ENCODE measurements at regions of chr18 and their contacts with region 1.

Region 1: GRCh38 chr18:20971886-20972267 is 139.7 kb downstream of the ROCK1 start:
- DNase-seq: peak in 1 of 2 donors; percentile 46
- ATAC-seq: peak; percentile 37 to 63 (median 63)
- H3K4me3 ChIP-seq: no peak overlapping the region
- H3K4me3 Mint-ChIP-seq: no peak overlapping the region
- H3K27ac ChIP-seq: no peak overlapping the region
- H3K27ac Mint-ChIP-seq: peak overlapping the region in 1 of 2 donors; percentile 4
- H3K4me1 ChIP-seq: no peaks in the 10 kb centered on the region
- H3K4me1 Mint-ChIP-seq: peaks cover 5 to 16% of the 10 kb centered on the region in 2 donors
- H3K27me3 ChIP-seq: no peaks in the 10 kb centered on the region
- H3K27me3 Mint-ChIP-seq: no peaks in the 10 kb centered on the region
- CTCF ChIP-seq: peak; percentile 52

Region 2: GRCh38 chr18:21012308-21012707 is 40.4 kb after region 1 on chr18:
- intact Hi-C with region 1: no loop called
- DNase-seq: no peak
- ATAC-seq: no peak
- H3K4me3 ChIP-seq: no peak overlapping the region
- H3K4me3 Mint-ChIP-seq: no peak overlapping the region
- H3K27ac ChIP-seq: no peak overlapping the region
- H3K27ac Mint-ChIP-seq: peak overlapping the region in 1 of 2 donors; percentile 26
- H3K4me1 ChIP-seq: no peaks in the 10 kb centered on the region
- H3K4me1 Mint-ChIP-seq: peaks cover 0 to 9% of the 10 kb centered on the region in 2 donors
- H3K27me3 ChIP-seq: no peaks in the 10 kb centered on the region
- H3K27me3 Mint-ChIP-seq: no peaks in the 10 kb centered on the region
- CTCF ChIP-seq: no peak

Region 3: GRCh38 chr18:21038201-21038600 is 66.3 kb after region 1 on chr18:
- intact Hi-C with region 1: no loop called
- DNase-seq: no peak
- ATAC-seq: no peak
- H3K4me3 ChIP-seq: no peak overlapping the region
- H3K4me3 Mint-ChIP-seq: no peak overlapping the region
- H3K27ac ChIP-seq: no peak overlapping the region
- H3K27ac Mint-ChIP-seq: peak overlapping the region in 1 of 2 donors; percentile 72
- H3K4me1 ChIP-seq: no peaks in the 10 kb centered on the region
- H3K4me1 Mint-ChIP-seq: peaks cover 15 to 21% of the 10 kb centered on the region in 2 donors
- H3K27me3 ChIP-seq: no peaks in the 10 kb centered on the region
- H3K27me3 Mint-ChIP-seq: no peaks in the 10 kb centered on the region
- CTCF ChIP-seq: no peak

Region 4: DNA sequence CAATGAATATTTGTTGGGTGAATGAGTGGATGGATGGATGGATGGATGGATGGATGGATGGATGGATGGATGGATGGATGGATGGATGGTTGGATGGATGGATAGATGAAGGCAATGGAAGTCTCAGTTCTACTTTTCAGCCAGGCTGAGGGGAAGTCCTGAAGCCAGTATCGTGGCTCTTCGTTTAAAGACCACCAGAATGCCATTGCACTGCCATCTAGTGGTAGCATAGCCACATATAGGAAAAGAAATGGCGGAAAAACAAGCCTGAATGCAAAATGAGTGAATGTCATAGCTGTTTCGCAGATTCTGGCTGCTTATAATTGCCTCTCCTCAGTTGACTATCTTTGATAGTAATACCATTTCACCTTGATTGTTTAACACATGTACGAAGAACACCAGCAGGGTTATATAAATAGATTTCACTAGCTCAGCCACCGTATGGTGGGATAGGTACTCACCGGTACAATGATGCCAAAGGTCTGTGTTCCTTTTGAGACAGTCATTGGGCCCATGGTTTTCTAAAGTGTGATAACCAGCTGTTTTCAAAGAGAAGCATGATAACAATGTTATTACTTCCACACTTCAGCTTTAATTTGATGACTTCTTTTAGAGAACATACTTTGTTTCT is 207.8 kb after region 1 on chr18:
- intact Hi-C with region 1: loop called (anchors 5 kb)
- DNase-seq: peak; percentile 20 to 75
- ATAC-seq: peak; percentile 72 to 83 (median 79)
- H3K4me3 ChIP-seq: no peak overlapping the region
- H3K4me3 Mint-ChIP-seq: no peak overlapping the region
- H3K27ac ChIP-seq: no peak overlapping the region
- H3K27ac Mint-ChIP-seq: no peak overlapping the region
- H3K4me1 ChIP-seq: no peaks in the 10 kb centered on the region
- H3K4me1 Mint-ChIP-seq: peaks cover 5 to 6% of the 10 kb centered on the region in 2 donors
- H3K27me3 ChIP-seq: no peaks in the 10 kb centered on the region
- H3K27me3 Mint-ChIP-seq: no peaks in the 10 kb centered on the region
- CTCF ChIP-seq: peak; percentile 69

Measured in natural killer cell (primary cell).